AG04450 (cell line): ENCODE measurements at regions of chr6 and their contacts with region 1.

Region 1: GRCh38 chr6:104682722-104683643 is 176.7 kb downstream of the HACE1 start:
- DNase-seq: peak; percentile 20
- H3K4me3 ChIP-seq: no peak overlapping the region
- H3K27ac ChIP-seq: no peak overlapping the region
- H3K27me3 ChIP-seq: no peaks in the 10 kb centered on the region
- CTCF ChIP-seq: peak; percentile 96

Region 2: GRCh38 chr6:104700371-104701186 is 17.6 kb after region 1 on chr6:
- CTCF ChIA-PET with region 1: interaction called, 10 read pairs
- POLR2A ChIA-PET with region 1: no interaction called
- DNase-seq: no peak
- H3K4me3 ChIP-seq: no peak overlapping the region
- H3K27ac ChIP-seq: no peak overlapping the region
- H3K27me3 ChIP-seq: no peaks in the 10 kb centered on the region
- CTCF ChIP-seq: no peak

Region 3: GRCh38 chr6:104771258-104771832 is 88.4 kb after region 1 on chr6:
- CTCF ChIA-PET with region 1: interaction called, 58 read pairs
- POLR2A ChIA-PET with region 1: no interaction called
- DNase-seq: no peak
- H3K4me3 ChIP-seq: no peak overlapping the region
- H3K27ac ChIP-seq: no peak overlapping the region
- H3K27me3 ChIP-seq: no peaks in the 10 kb centered on the region
- CTCF ChIP-seq: peak; percentile 50

Region 4: GRCh38 chr6:104952911-104953399 is 270.0 kb after region 1 on chr6:
- CTCF ChIA-PET with region 1: no interaction called
- POLR2A ChIA-PET with region 1: no interaction called
- DNase-seq: no peak
- H3K4me3 ChIP-seq: no peak overlapping the region
- H3K27ac ChIP-seq: no peak overlapping the region
- H3K27me3 ChIP-seq: peaks cover 47% of the 10 kb centered on the region
- CTCF ChIP-seq: no peak

Region 5: GRCh38 chr6:105492706-105493673 is 810.0 kb after region 1 on chr6:
- CTCF ChIA-PET with region 1: no interaction called
- POLR2A ChIA-PET with region 1: no interaction called
- DNase-seq: no peak
- H3K4me3 ChIP-seq: no peak overlapping the region
- H3K27ac ChIP-seq: no peak overlapping the region
- H3K27me3 ChIP-seq: no peaks in the 10 kb centered on the region
- CTCF ChIP-seq: no peak